Endothelial cell of umbilical vein (primary cell): ENCODE measurements at regions of chr2 and their contacts with region 1.

Region 1: DNA sequence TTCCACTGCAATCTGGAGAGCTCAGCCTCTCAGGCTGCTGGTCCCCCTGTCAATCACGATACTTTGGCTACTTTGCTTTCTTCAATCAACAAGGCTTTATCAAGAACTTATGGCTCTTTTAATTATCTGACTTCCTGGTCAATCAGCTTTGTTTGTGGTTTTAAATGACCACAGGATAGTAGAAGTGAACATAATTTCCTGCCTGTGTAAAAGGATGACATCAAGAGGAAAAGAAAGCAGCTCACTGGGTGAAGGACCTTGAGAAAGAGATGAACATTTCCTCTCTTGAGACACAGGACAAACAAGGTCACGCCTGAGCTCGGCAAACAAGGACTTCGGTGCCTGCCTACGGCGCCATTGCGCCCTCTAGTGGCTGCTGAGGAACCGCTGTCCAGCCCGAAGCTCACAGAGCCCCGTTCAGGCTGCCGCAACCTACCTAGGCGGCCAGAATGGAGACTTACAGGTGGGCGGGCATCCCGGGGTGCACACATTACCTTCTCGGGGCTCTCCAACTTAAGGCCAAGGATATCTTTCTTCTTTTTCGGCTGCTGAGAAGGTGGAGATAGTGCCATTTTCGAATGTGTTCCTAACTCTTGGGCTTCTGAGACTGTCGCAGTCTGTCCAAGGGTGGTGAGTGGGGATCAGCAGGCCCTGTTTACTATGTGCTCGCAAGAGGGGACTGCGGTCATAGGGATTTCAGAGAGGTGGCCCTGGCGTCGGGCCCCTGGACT is 54.0 kb downstream of the IL1RL2 start:
- DNase-seq: peak; percentile 94
- H3K4me3 ChIP-seq: no peak overlapping the region
- H3K27ac ChIP-seq: peak overlapping the region; percentile 36
- H3K4me1 ChIP-seq: peaks cover 12% of the 10 kb centered on the region
- H3K27me3 ChIP-seq: no peaks in the 10 kb centered on the region
- CTCF ChIP-seq: peak; percentile 97
- POLR2A ChIP-seq: no peak

Region 2: GRCh38 chr2:101341901-101342624 is 898.7 kb before region 1 on chr2:
- CTCF ChIA-PET with region 1: interaction called, 12 read pairs
- POLR2A ChIA-PET with region 1: no interaction called
- dilution Hi-C with region 1: no loop called
- intact Hi-C with region 1: no loop called
- DNase-seq: peak; percentile 68
- H3K4me3 ChIP-seq: no peak overlapping the region
- H3K27ac ChIP-seq: no peak overlapping the region
- H3K4me1 ChIP-seq: peaks cover 9% of the 10 kb centered on the region
- H3K27me3 ChIP-seq: no peaks in the 10 kb centered on the region
- CTCF ChIP-seq: peak; percentile 75 to 87
- POLR2A ChIP-seq: no peak

Region 3: DNA sequence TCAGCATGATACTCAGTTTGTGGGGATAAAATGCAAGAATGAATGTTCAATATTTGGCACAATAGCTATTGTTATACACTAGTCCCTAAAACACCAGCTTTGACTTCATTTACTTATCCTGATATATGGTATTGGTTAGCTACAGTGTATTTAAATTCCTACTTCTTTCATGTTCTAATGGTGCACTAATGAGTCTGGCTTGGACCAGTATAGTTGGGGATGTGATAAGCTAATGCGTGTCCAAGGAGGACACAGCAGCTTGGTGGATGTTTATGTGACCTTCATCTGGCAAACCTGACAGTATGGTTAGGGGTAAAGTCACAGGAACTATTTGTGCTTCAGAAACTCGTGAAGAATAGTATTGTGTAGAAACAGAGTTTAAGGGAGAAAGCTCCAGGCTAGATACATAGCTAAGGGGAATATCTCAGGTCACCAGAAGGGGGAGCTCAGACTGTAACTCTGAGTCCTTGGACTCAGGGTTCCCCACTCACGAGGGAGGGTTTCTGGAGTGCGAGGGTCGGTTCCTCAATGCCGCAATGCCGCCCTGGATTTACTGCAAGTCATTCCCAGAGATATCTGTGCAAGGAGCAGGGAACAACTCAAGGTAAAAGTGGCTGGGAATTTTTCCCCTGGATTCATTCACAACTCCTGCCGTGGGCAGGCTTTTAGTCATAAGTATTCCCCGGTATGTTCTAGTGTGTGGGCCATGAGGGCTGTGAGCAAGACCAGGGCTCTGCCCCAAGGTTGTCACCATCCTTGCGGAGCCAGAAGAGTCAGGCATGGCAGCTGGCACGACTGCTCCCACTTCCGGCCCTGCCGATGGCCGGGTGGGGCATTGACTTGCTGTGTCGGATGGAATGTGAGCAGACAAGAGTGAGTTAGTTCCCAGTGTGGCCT is 234.6 kb before region 1 on chr2:
- CTCF ChIA-PET with region 1: interaction called, 172 read pairs
- POLR2A ChIA-PET with region 1: interaction called, 3 read pairs
- dilution Hi-C with region 1: no loop called
- intact Hi-C with region 1: loop called (anchors 1 kb)
- DNase-seq: peak; percentile 55
- H3K4me3 ChIP-seq: no peak overlapping the region
- H3K27ac ChIP-seq: no peak overlapping the region
- H3K4me1 ChIP-seq: peaks cover 9% of the 10 kb centered on the region
- H3K27me3 ChIP-seq: no peaks in the 10 kb centered on the region
- CTCF ChIP-seq: peak; percentile 66 to 82
- POLR2A ChIP-seq: no peak

Region 4: DNA sequence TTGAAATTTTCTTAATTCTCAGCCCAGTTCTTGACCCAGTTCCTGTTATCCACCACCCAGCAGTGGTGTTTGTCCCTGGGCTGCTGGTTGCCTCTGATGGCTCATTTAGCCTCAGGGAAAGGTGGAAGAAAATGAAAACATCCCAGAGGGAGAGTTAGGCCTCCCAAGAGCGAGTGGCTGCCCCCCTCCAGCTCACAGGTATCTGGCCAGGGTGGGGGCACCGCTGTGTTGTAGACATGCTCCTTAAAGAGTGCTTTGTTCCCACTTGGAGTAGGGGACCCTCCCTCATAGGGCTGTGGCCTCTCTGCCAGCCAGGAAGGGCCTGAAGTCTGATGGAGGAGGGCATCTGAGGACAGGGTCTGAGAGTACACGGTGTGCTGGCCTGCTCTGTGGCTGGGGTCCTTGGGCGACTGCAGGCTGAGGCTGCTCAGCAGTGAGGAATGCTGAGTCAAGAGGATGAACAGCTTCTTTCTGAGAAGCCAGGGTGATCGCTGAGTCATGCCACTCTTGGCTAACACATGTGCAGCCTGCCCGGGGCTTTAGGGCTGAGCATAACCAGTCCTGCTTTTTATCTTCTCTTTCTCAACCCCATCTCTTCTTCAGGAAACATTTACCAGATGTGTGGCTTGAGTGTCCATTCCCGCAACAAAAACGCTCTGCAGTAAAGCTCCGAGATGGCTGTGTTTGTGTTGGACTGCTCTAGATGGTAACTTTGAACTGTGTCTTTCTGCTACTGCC is 176.7 kb before region 1 on chr2:
- CTCF ChIA-PET with region 1: interaction called, 14 read pairs
- POLR2A ChIA-PET with region 1: no interaction called
- dilution Hi-C with region 1: no loop called
- intact Hi-C with region 1: no loop called
- DNase-seq: peak; percentile 86
- H3K4me3 ChIP-seq: no peak overlapping the region
- H3K27ac ChIP-seq: peak overlapping the region; percentile 50
- H3K4me1 ChIP-seq: peaks cover 17% of the 10 kb centered on the region
- H3K27me3 ChIP-seq: no peaks in the 10 kb centered on the region
- CTCF ChIP-seq: no peak
- POLR2A ChIP-seq: peak; percentile 3

Region 5: GRCh38 chr2:102141970-102142828 is 98.6 kb before region 1 on chr2 and contains the start of gene IL1R1:
- CTCF ChIA-PET with region 1: interaction called, 23 read pairs
- POLR2A ChIA-PET with region 1: no interaction called
- dilution Hi-C with region 1: no loop called
- intact Hi-C with region 1: no loop called
- DNase-seq: peak; percentile 73
- H3K4me3 ChIP-seq: peak within 1 kb of the TSS; percentile 56 to 63 (median 63)
- H3K27ac ChIP-seq: peak within 1 kb of the TSS; percentile 16
- H3K4me1 ChIP-seq: peaks cover 14% of the 10 kb centered on the region
- H3K27me3 ChIP-seq: no peaks in the 10 kb centered on the region
- CTCF ChIP-seq: no peak
- POLR2A ChIP-seq: peak; percentile 32
- total RNA-seq, gene IL1R1: 2.9 and 5.5 TPM in 2 replicates

Region 6: DNA sequence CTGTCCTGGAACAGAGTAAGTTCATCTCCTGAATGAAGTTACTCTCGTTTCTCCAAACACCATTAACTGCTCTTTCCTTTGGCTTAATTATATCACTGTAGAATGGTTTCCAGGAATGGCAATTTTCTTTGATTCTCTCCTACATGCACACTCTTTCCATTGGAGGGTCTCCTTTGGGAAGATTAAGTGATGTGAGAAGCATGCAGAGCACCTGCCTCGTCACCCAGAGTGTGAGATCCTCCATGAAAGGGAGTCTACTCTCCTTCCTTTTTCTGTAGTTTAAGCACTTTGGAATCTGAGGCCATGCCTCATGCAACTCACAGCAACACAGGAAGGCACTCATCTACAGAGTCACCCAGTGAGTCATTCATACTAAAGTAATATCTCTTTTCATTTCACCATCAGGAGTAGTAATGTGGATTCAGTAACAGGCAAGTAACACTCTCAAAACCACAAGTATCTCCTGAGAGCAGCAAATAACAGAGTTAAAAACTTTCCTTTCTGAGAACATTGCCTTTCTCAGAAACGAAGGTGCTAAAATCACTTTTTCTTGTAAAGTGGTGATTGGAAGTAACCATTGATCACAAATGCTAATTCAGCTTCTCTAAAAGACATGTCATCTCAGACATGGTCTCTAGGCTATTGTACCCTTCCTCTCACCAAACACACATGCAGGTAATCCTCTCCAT is 17.7 kb after region 1 on chr2:
- CTCF ChIA-PET with region 1: interaction called, 11 read pairs
- POLR2A ChIA-PET with region 1: no interaction called
- dilution Hi-C with region 1: no loop called
- intact Hi-C with region 1: no loop called
- DNase-seq: peak; percentile 78
- H3K4me3 ChIP-seq: no peak overlapping the region
- H3K27ac ChIP-seq: peak overlapping the region; percentile 35
- H3K4me1 ChIP-seq: peaks cover 15% of the 10 kb centered on the region
- H3K27me3 ChIP-seq: no peaks in the 10 kb centered on the region
- CTCF ChIP-seq: no peak
- POLR2A ChIP-seq: no peak

Region 7: DNA sequence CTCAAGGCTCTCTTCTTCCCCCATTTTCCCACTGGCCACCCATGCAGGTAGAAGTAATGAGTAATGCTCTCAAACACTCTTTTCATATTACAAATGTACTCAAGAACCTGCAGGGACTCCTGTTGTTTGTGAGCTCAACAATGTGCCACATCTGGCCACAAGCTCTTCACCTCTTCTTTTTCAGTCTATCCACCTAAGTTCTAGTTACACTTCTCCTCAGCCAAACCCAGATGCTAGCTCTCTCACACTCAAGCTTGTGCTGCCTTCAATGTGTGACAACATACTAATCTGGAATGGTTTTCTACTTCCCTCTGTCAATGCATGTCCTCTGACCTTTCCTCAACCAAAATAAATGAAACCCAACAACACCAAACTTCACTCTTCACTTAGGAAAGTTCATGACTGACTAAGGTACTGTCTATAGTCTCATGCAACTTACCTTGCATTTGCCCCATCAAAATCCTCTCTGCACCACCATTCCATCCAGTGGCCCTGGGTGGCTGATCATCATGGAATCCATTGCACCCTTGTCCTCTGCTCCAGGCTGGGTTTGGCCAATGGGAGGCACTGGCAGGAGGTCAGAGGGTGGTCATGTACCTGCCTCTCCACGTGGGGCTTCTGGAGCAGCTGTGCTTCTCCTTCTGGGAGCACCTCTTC is 109.5 kb after region 1 on chr2:
- CTCF ChIA-PET with region 1: interaction called, 12 read pairs
- POLR2A ChIA-PET with region 1: no interaction called
- dilution Hi-C with region 1: no loop called
- intact Hi-C with region 1: no loop called
- DNase-seq: no peak
- H3K4me3 ChIP-seq: no peak overlapping the region
- H3K27ac ChIP-seq: no peak overlapping the region
- H3K4me1 ChIP-seq: peaks cover 16% of the 10 kb centered on the region
- H3K27me3 ChIP-seq: no peaks in the 10 kb centered on the region
- CTCF ChIP-seq: no peak
- POLR2A ChIP-seq: no peak